ENCODE measurements at regions of chr19 and their contacts with region 1.

Region 1: DNA sequence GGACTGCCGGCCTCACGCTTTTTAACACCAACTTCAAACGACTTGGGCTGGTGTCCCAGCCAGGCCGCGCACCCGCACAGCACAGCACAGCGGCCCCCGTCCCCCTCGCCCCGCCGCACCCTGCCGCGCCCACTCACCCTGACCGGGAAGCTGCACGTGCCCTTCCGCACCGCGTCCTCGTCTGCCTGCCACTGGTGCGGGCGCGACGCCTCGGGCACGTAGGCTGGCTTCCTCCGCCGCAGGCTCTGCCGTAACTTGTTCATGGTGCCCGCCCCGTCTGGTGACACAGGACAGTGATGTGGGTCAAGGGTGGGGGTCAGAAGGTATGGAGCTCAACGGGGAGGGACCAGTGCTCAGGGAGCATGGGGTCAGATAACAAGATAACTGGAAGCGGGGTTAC is 6.2 kb downstream of the NUMBL start:
- DNase-seq: no peak
- H3K4me3 Mint-ChIP-seq: no peak overlapping the region
- H3K27ac Mint-ChIP-seq: no peak overlapping the region
- H3K4me1 Mint-ChIP-seq: no peaks in the 10 kb centered on the region
- H3K27me3 Mint-ChIP-seq: no peaks in the 10 kb centered on the region
- CTCF ChIP-seq: no peak

Region 2: DNA sequence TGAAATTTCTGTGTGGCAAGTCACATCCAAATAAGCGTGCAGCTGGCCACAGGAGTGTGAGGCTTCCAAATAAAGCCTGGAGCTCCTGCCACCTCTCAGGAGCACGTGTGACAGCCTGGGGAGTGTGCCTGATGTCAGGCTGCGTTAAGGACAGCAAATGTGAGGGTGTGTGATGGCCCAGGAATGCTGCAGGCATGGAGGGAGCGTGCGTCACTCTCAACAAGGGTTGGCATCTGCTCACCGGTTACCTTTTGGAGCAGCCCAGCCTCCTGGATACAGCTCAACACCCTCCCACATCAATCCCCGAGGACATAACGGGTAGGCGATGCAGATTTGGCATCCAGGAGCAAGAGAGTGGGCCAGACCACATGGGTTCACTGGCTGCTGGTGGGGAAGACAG is 12.9 kb before region 1 on chr19:
- CTCF ChIA-PET with region 1: no interaction called
- intact Hi-C with region 1: no loop called
- DNase-seq: no peak
- H3K4me3 Mint-ChIP-seq: no peak overlapping the region
- H3K27ac Mint-ChIP-seq: no peak overlapping the region
- H3K4me1 Mint-ChIP-seq: peaks cover 6% of the 10 kb centered on the region
- H3K27me3 Mint-ChIP-seq: no peaks in the 10 kb centered on the region
- CTCF ChIP-seq: no peak

Region 3: DNA sequence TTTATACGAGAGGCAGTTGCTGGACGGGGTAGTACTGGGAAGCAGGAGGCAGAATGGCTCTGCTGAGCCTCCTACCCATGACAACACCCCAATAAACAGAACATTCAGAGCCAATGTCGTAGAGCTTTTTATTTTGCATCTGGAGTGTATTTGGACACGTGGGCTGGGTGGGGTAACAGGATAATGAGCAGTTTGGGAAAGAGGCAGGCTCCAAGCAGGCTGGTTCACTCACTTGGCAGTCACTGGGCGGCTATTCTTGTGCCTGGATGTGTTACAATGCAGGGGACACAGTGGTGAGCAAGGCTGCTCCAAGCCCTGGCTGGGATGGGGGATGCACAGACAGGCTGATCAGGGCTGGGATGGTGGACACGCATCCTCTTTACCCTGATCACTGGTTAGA is 56.5 kb after region 1 on chr19:
- CTCF ChIA-PET with region 1: interaction called, 13 read pairs
- intact Hi-C with region 1: no loop called
- DNase-seq: no peak
- H3K4me3 Mint-ChIP-seq: no peak overlapping the region
- H3K27ac Mint-ChIP-seq: peak overlapping the region; percentile 43
- H3K4me1 Mint-ChIP-seq: peaks cover 2% of the 10 kb centered on the region
- H3K27me3 Mint-ChIP-seq: no peaks in the 10 kb centered on the region
- CTCF ChIP-seq: no peak